AG04450 (cell line): ENCODE measurements at regions of chr19 and their contacts with region 1.

Region 1: GRCh38 chr19:23249911-23250649 is at the start of gene ZNF724:
- DNase-seq: peak; percentile 94
- H3K4me3 ChIP-seq: peak within 1 kb of the TSS; percentile 86
- H3K27ac ChIP-seq: peak within 1 kb of the TSS; percentile 78
- H3K27me3 ChIP-seq: no peaks in the 10 kb centered on the region
- CTCF ChIP-seq: no peak
- polyA plus RNA-seq, gene ZNF724: 0.97 and 1.1 TPM in 2 replicates

Region 2: GRCh38 chr19:23343434-23344010 is 93.4 kb after region 1 on chr19:
- CTCF ChIA-PET with region 1: interaction called, 10 read pairs
- POLR2A ChIA-PET with region 1: no interaction called
- DNase-seq: no peak
- H3K4me3 ChIP-seq: no peak overlapping the region
- H3K27ac ChIP-seq: no peak overlapping the region
- H3K27me3 ChIP-seq: no peaks in the 10 kb centered on the region
- CTCF ChIP-seq: no peak